ENCODE measurements at regions of chr2 and their contacts with region 1.

Region 1: GRCh38 chr2:68282811-68283418 is 30.6 kb upstream of the PPP3R1 start:
- DNase-seq: no peak
- H3K4me3 ChIP-seq: no peak overlapping the region
- H3K27ac ChIP-seq: no peak overlapping the region
- H3K4me1 ChIP-seq: peaks cover 0 to 6% of the 10 kb centered on the region in 2 donors
- H3K27me3 ChIP-seq: no peaks in the 10 kb centered on the region
- CTCF ChIP-seq: peak; percentile 43 to 67 (median 49)

Region 2: DNA sequence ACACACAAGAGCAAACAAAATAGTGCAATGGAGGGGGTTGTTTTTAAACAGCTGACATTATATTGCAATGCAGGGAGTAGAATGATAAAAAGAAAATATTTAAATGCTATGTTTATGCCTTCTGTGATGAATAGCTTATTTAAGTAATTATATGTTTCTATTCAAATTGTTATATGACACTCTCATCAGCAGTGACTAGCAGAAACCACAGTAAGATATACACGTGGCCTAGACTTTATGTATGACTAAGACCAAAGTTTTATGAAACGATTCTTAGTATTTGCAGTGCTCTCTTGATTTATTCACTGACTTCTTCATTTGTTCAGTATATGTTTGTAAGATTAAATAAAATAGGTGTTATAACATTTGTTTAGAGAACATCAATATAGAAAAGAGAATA is 194.0 kb before region 1 on chr2:
- intact Hi-C with region 1: no loop called
- DNase-seq: no peak
- H3K4me3 ChIP-seq: no peak overlapping the region
- H3K27ac ChIP-seq: no peak overlapping the region
- H3K4me1 ChIP-seq: no peaks in the 10 kb centered on the region
- H3K27me3 ChIP-seq: no peaks in the 10 kb centered on the region
- CTCF ChIP-seq: no peak

Region 3: DNA sequence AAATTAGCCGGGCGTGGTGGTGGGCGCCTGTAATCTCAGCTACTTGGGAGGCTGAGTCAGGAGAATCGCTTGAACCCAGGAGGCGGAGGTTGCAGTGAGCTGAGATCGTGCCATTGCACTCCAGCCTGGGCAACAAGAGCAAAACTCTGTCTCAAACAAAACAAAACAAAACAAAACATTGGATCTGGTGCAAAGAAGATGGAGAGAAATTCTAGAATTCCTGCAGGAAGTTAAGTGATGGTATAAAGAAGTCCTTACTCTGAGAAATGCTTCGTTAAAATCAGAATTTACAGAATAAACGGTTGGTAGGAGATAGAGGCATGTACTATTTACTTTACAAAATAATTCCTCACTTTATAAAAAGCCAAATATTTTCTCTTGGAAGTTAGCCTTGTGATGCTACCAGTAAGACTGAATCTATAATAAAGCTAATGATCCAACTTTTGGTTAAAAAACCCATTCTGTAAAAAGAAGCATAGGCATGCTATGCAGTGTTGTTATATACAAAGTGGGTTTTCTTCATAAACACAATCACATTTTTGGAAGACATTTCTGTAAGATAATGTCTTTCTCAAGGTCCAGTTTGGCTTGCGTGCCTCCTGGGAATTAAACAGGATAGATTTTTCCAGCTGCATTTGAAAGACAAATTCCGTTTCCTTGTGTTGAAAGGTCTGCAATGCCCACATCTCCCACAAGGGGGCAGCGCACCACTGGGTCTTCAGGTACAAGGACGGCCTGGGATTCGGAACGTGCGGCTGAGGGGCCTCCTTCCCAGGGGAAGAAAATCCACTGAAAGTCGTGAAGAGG is 160.8 kb before region 1 on chr2:
- intact Hi-C with region 1: loop called (anchors 2 kb)
- DNase-seq: peak; percentile 22 to 92
- H3K4me3 ChIP-seq: no peak overlapping the region
- H3K27ac ChIP-seq: no peak overlapping the region
- H3K4me1 ChIP-seq: no peaks in the 10 kb centered on the region
- H3K27me3 ChIP-seq: no peaks in the 10 kb centered on the region
- CTCF ChIP-seq: peak; percentile 81 to 96 (median 90)

Region 4: GRCh38 chr2:68196120-68196716 is 86.7 kb before region 1 on chr2:
- intact Hi-C with region 1: loop called (anchors 2 kb)
- DNase-seq: no peak
- H3K4me3 ChIP-seq: no peak overlapping the region
- H3K27ac ChIP-seq: no peak overlapping the region
- H3K4me1 ChIP-seq: peaks cover 0 to 25% of the 10 kb centered on the region in 2 donors
- H3K27me3 ChIP-seq: no peaks in the 10 kb centered on the region
- CTCF ChIP-seq: peak; percentile 53 to 74 (median 58)

Region 5: GRCh38 chr2:68244456-68244855 is 38.5 kb before region 1 on chr2:
- intact Hi-C with region 1: no loop called
- DNase-seq: no peak
- H3K4me3 ChIP-seq: no peak overlapping the region
- H3K27ac ChIP-seq: no peak overlapping the region
- H3K4me1 ChIP-seq: peaks cover 4 to 35% of the 10 kb centered on the region in 2 donors
- H3K27me3 ChIP-seq: no peaks in the 10 kb centered on the region
- CTCF ChIP-seq: peak in 1 of 3 experiments; percentile 16

Region 6: GRCh38 chr2:68423966-68424650 is 141.2 kb after region 1 on chr2:
- intact Hi-C with region 1: no loop called
- DNase-seq: no peak
- H3K4me3 ChIP-seq: no peak overlapping the region
- H3K27ac ChIP-seq: no peak overlapping the region
- H3K4me1 ChIP-seq: no peaks in the 10 kb centered on the region
- H3K27me3 ChIP-seq: no peaks in the 10 kb centered on the region
- CTCF ChIP-seq: no peak